ENCODE measurements at regions of chr2 and their contacts with region 1.

Region 1: GRCh38 chr2:231514103-231514950 is 15.9 kb downstream of the NMUR1 start:
- DNase-seq: peak; percentile 96
- ATAC-seq: peak; percentile 100
- H3K4me3 ChIP-seq: peak overlapping the region; percentile 74
- H3K27ac ChIP-seq: peak overlapping the region; percentile 21
- H3K4me1 ChIP-seq: peaks cover 17% of the 10 kb centered on the region
- H3K27me3 ChIP-seq: no peaks in the 10 kb centered on the region
- CTCF ChIP-seq: no peak

Region 2: GRCh38 chr2:231037731-231038482 is 476.4 kb before region 1 on chr2:
- CTCF ChIA-PET with region 1: no interaction called
- POLR2A ChIA-PET with region 1: no interaction called
- intact Hi-C with region 1: no loop called
- DNase-seq: no peak
- ATAC-seq: peak; percentile 54
- H3K4me3 ChIP-seq: peak overlapping the region; percentile 52
- H3K27ac ChIP-seq: no peak overlapping the region
- H3K4me1 ChIP-seq: no peaks in the 10 kb centered on the region
- H3K27me3 ChIP-seq: peaks cover 21% of the 10 kb centered on the region
- CTCF ChIP-seq: no peak

Region 3: GRCh38 chr2:231463698-231464575 is 50.4 kb before region 1 on chr2 and contains the start of gene NCL:
- CTCF ChIA-PET with region 1: interaction called, 3 read pairs
- POLR2A ChIA-PET with region 1: interaction called, 5 read pairs
- intact Hi-C with region 1: loop called (anchors 2 kb)
- DNase-seq: peak; percentile 96
- ATAC-seq: peak; percentile 95
- H3K4me3 ChIP-seq: peak within 1 kb of the TSS; percentile 94
- H3K27ac ChIP-seq: peak within 1 kb of the TSS; percentile 85
- H3K4me1 ChIP-seq: peaks cover 22% of the 10 kb centered on the region
- H3K27me3 ChIP-seq: no peaks in the 10 kb centered on the region
- CTCF ChIP-seq: no peak
- total RNA-seq, gene NCL: 430 and 507 TPM in 2 replicates

Region 4: DNA sequence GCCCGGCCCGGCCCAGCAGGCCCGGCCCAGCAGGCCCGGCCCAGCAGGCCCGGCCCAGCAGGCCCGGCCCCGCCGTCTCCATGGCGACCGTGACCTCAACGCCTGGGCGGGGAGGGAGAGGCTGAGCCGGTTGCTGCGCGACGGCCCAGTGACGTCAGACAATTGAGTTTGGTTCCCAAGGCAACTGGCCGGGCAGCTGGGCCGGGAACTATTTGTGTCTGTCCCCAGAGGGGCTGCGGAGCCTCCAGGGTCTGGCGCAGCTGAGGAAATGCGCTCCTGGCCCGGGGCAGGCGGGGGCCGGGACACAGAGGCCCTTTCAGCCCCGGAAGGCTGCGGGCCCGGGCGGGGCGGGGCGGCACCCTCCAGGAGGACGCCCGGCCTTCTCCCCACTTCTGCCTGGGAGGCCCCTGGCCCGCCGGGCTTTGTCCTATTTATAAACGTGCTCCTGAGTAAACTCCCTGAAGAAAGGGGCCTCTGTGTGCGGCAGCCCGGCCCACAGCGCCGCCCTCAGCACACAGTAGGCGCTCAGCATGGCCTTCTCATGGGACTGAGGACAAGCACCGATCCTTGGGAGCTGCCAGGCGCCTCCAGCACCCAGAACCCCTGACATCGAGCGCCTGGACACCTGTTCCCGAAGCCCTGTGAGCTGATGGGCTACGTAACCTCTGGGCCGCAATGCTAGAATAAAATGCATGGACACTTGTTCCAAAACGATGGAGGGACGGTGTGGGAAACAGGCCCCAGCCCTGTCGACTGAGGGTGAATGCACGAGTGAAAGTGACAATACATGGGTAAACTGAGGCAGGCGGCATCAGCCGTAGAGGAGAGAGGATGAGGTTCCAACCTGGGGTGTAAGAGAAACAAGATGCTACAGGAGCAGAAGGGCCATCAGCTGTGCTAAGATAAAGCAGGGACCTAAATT is 90.6 kb after region 1 on chr2:
- CTCF ChIA-PET with region 1: interaction called, 6 read pairs
- POLR2A ChIA-PET with region 1: no interaction called
- intact Hi-C with region 1: loop called (anchors 5 kb)
- DNase-seq: peak; percentile 96
- ATAC-seq: peak; percentile 85
- H3K4me3 ChIP-seq: peak overlapping the region; percentile 71
- H3K27ac ChIP-seq: peak overlapping the region; percentile 52
- H3K4me1 ChIP-seq: peaks cover 16% of the 10 kb centered on the region
- H3K27me3 ChIP-seq: no peaks in the 10 kb centered on the region
- CTCF ChIP-seq: no peak